ENCODE measurements at regions of chr13 and their contacts with region 1.

Region 1: DNA sequence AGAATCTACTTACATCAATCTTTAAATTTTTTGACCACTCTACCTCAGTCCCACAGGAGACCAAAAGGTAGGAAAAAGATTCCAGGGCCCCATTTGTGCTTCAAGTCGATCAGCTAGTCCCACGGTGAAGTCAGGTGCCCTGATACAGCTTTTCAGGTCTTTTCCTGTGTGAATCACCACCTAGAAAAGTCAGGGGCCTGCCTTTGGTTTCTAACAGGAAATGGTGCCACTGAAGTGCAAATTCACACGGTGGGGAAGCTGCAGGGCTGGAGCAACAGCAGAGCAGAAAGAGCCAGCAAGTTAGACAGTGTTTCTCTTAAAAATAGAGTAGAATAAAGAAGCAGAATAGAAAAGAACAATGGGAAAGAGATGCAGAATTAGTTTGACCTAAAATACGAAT is 107.5 kb downstream of the KLF12 start:
- DNase-seq: peak; percentile 61 to 85
- ATAC-seq: peak; percentile 93 to 97 (median 94)
- H3K4me3 ChIP-seq: peak overlapping the region; percentile 11
- H3K4me3 Mint-ChIP-seq: peak overlapping the region; percentile 89
- H3K27ac ChIP-seq: peak overlapping the region; percentile 67
- H3K27ac Mint-ChIP-seq: peak overlapping the region; percentile 90
- H3K4me1 ChIP-seq: peaks cover 7% of the 10 kb centered on the region
- H3K4me1 Mint-ChIP-seq: peaks cover 71 to 82% of the 10 kb centered on the region in 2 donors
- H3K27me3 ChIP-seq: no peaks in the 10 kb centered on the region
- H3K27me3 Mint-ChIP-seq: no peaks in the 10 kb centered on the region
- CTCF ChIP-seq: no peak

Region 2: DNA sequence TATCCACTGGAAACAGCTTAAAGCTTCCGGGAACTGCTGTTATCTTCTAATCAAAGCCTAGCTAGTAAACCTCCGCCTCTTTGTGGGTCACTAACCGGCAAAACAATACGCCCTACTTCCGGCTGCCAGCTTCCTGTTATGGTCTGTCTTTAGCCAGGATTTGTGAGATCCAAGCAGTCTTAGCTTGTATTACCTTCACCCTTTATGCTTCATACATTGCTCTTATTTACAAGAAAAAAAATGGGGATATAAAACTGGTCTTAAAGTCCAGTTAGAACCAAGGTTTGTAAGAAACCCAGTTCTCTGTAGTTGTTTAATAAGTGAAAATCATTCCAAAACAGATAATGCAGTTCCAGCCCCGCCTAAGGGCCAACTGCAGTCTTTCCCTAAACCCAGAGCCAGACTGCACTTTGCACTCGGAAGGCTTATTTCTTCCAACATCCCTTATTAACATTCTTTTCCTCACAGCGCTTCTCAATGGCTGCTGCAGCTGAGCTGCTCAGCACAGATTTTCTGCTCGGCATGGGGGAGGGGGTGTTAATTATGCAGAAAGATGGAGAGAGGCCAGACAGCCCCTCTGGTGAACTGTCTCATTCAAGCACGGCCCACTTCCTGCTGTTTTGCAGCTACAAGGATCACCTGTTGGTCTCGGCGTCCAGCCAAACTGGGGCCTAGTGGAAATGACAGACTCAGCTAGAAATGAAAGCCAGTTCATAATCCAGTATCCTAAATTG is 260.9 kb before region 1 on chr13:
- intact Hi-C with region 1: loop called (anchors 5 kb)
- DNase-seq: peak; percentile 56 to 91
- ATAC-seq: peak; percentile 86 to 90 (median 88)
- H3K4me3 ChIP-seq: no peak overlapping the region
- H3K4me3 Mint-ChIP-seq: peak overlapping the region; percentile 88
- H3K27ac ChIP-seq: peak overlapping the region; percentile 65
- H3K27ac Mint-ChIP-seq: peak overlapping the region; percentile 93 to 96
- H3K4me1 ChIP-seq: peaks cover 21% of the 10 kb centered on the region
- H3K4me1 Mint-ChIP-seq: peaks cover 59 to 70% of the 10 kb centered on the region in 2 donors
- H3K27me3 ChIP-seq: no peaks in the 10 kb centered on the region
- H3K27me3 Mint-ChIP-seq: no peaks in the 10 kb centered on the region
- CTCF ChIP-seq: no peak

Region 3: GRCh38 chr13:73934215-73934623 is 92.5 kb before region 1 on chr13:
- intact Hi-C with region 1: loop called (anchors 5 kb)
- DNase-seq: no peak
- ATAC-seq: peak; percentile 48 to 59 (median 54)
- H3K4me3 ChIP-seq: no peak overlapping the region
- H3K4me3 Mint-ChIP-seq: peak overlapping the region; percentile 43
- H3K27ac ChIP-seq: no peak overlapping the region
- H3K27ac Mint-ChIP-seq: peak overlapping the region; percentile 61 to 72
- H3K4me1 ChIP-seq: peaks cover 9% of the 10 kb centered on the region
- H3K4me1 Mint-ChIP-seq: peaks cover 69 to 74% of the 10 kb centered on the region in 2 donors
- H3K27me3 ChIP-seq: no peaks in the 10 kb centered on the region
- H3K27me3 Mint-ChIP-seq: no peaks in the 10 kb centered on the region
- CTCF ChIP-seq: no peak

Region 4: GRCh38 chr13:74005320-74006157 is 21.2 kb before region 1 on chr13:
- intact Hi-C with region 1: no loop called
- DNase-seq: peak in 1 of 2 donors; percentile 21
- ATAC-seq: no peak
- H3K4me3 ChIP-seq: no peak overlapping the region
- H3K4me3 Mint-ChIP-seq: no peak overlapping the region
- H3K27ac ChIP-seq: no peak overlapping the region
- H3K27ac Mint-ChIP-seq: peak overlapping the region in 1 of 2 donors; percentile 1
- H3K4me1 ChIP-seq: no peaks in the 10 kb centered on the region
- H3K4me1 Mint-ChIP-seq: peaks cover 56 to 64% of the 10 kb centered on the region in 2 donors
- H3K27me3 ChIP-seq: no peaks in the 10 kb centered on the region
- H3K27me3 Mint-ChIP-seq: no peaks in the 10 kb centered on the region
- CTCF ChIP-seq: no peak

Region 5: GRCh38 chr13:74062933-74063332 is 36.2 kb after region 1 on chr13:
- intact Hi-C with region 1: loop called (anchors 5 kb)
- DNase-seq: peak in 1 of 2 donors; percentile 52
- ATAC-seq: no peak
- H3K4me3 ChIP-seq: no peak overlapping the region
- H3K4me3 Mint-ChIP-seq: peak overlapping the region; percentile 82
- H3K27ac ChIP-seq: peak overlapping the region; percentile 79
- H3K27ac Mint-ChIP-seq: peak overlapping the region; percentile 87 to 89
- H3K4me1 ChIP-seq: peaks cover 10% of the 10 kb centered on the region
- H3K4me1 Mint-ChIP-seq: peaks cover 72 to 83% of the 10 kb centered on the region in 2 donors
- H3K27me3 ChIP-seq: no peaks in the 10 kb centered on the region
- H3K27me3 Mint-ChIP-seq: no peaks in the 10 kb centered on the region
- CTCF ChIP-seq: no peak

Region 6: DNA sequence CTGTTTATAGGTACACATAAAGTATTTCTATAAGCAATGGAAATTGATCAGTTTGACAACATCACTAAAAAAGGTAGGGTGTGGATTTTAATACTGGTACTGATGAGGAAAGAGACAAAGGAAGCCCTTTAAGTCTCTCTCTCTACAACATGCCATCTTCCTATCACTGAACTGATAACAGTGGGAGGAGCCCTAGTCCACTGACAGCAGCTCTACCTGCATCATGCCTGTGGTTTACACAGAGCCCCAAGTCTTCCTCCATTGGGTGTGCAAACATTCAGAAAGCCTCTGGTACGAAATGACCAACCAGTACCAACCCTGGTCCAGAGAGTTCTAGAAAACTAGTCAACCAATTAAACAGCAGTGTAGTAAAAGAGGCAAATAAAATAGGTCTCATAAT is 54.0 kb after region 1 on chr13:
- intact Hi-C with region 1: no loop called
- DNase-seq: peak in 1 of 2 donors; percentile 44
- ATAC-seq: peak; percentile 29 to 67 (median 41)
- H3K4me3 ChIP-seq: no peak overlapping the region
- H3K4me3 Mint-ChIP-seq: no peak overlapping the region
- H3K27ac ChIP-seq: no peak overlapping the region
- H3K27ac Mint-ChIP-seq: peak overlapping the region; percentile 51 to 58
- H3K4me1 ChIP-seq: peaks cover 3% of the 10 kb centered on the region
- H3K4me1 Mint-ChIP-seq: peaks cover 64 to 77% of the 10 kb centered on the region in 2 donors
- H3K27me3 ChIP-seq: no peaks in the 10 kb centered on the region
- H3K27me3 Mint-ChIP-seq: no peaks in the 10 kb centered on the region
- CTCF ChIP-seq: no peak

Region 7: GRCh38 chr13:74090869-74091605 is 64.3 kb after region 1 on chr13:
- intact Hi-C with region 1: loop called (anchors 2 kb)
- DNase-seq: peak in 1 of 2 donors; percentile 53
- ATAC-seq: peak; percentile 68 to 77 (median 71)
- H3K4me3 ChIP-seq: peak overlapping the region; percentile 5
- H3K4me3 Mint-ChIP-seq: peak overlapping the region; percentile 77
- H3K27ac ChIP-seq: peak overlapping the region; percentile 57
- H3K27ac Mint-ChIP-seq: peak overlapping the region; percentile 83 to 90
- H3K4me1 ChIP-seq: peaks cover 20% of the 10 kb centered on the region
- H3K4me1 Mint-ChIP-seq: peaks cover 79 to 83% of the 10 kb centered on the region in 2 donors
- H3K27me3 ChIP-seq: no peaks in the 10 kb centered on the region
- H3K27me3 Mint-ChIP-seq: no peaks in the 10 kb centered on the region
- CTCF ChIP-seq: no peak

Region 8: DNA sequence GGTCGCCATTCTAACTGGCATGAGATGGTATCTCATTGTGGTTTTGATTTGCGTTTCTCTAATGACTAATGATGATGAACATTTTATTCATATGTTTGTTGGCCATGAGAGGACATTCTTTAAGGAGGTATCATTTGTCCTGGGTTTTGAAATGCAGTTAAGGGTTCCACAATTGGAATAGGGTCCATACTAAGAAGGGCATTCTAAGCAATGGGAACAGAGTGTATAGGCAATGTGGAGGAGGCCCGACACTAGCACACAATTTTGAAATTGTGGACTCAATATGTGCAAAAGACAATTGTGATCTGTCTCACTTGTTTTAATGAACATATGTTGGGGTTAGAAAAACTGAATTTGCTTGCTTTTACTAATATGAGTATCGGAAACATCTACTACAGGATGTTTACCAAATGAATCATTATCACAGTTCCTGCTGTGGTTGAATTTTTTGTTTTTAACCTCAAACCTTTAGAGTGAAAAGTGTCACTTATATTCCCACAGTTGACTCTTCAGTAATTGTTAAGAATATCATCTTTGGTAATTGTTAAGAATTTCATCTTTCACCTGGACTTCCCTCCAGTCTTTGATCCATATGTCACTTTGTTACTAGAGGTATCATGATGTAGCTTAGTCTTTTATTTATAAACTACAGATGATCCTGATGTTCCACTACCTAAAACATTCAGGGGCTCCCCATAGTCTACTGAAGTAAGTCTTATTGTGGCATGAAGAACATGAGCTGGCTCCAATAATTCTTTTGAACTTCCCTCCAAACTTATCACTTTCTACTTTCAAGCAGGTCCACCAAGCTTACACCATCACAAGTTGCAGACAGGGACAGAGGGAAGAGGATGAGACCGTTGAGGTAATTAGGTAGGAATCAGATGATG is 217.1 kb after region 1 on chr13:
- intact Hi-C with region 1: loop called (anchors 1 kb)
- DNase-seq: peak in 1 of 2 donors; percentile 70
- ATAC-seq: peak; percentile 76 to 89 (median 84)
- H3K4me3 ChIP-seq: no peak overlapping the region
- H3K4me3 Mint-ChIP-seq: peak overlapping the region; percentile 91
- H3K27ac ChIP-seq: peak overlapping the region; percentile 87
- H3K27ac Mint-ChIP-seq: peak overlapping the region; percentile 95 to 98
- H3K4me1 ChIP-seq: peaks cover 26% of the 10 kb centered on the region
- H3K4me1 Mint-ChIP-seq: peaks cover 68% of the 10 kb centered on the region in 2 donors
- H3K27me3 ChIP-seq: no peaks in the 10 kb centered on the region
- H3K27me3 Mint-ChIP-seq: no peaks in the 10 kb centered on the region
- CTCF ChIP-seq: no peak

Region 9: GRCh38 chr13:74287724-74288169 is 261.0 kb after region 1 on chr13:
- intact Hi-C with region 1: loop called (anchors 5 kb)
- DNase-seq: peak; percentile 40 to 98
- ATAC-seq: peak; percentile 52 to 65 (median 61)
- H3K4me3 ChIP-seq: peak overlapping the region; percentile 19
- H3K4me3 Mint-ChIP-seq: peak overlapping the region; percentile 93
- H3K27ac ChIP-seq: peak overlapping the region; percentile 76
- H3K27ac Mint-ChIP-seq: peak overlapping the region; percentile 93 to 95
- H3K4me1 ChIP-seq: peaks cover 20% of the 10 kb centered on the region
- H3K4me1 Mint-ChIP-seq: peaks cover 50 to 61% of the 10 kb centered on the region in 2 donors
- H3K27me3 ChIP-seq: no peaks in the 10 kb centered on the region
- H3K27me3 Mint-ChIP-seq: no peaks in the 10 kb centered on the region
- CTCF ChIP-seq: no peak

Measured in natural killer cell (primary cell).